ENCODE measurements at regions of chr6 and their contacts with region 1.

Region 1: GRCh38 chr6:31541658-31542521 is at the start of gene DDX39B:
- DNase-seq: peak; percentile 96
- ATAC-seq: peak; percentile 82
- H3K4me3 Mint-ChIP-seq: peak within 1 kb of the TSS; percentile 96
- H3K27ac Mint-ChIP-seq: peak within 1 kb of the TSS; percentile 94
- H3K4me1 Mint-ChIP-seq: peaks cover 50% of the 10 kb centered on the region
- H3K27me3 Mint-ChIP-seq: no peaks in the 10 kb centered on the region
- total RNA-seq, gene DDX39B: 477 to 488 TPM

Region 2: DNA sequence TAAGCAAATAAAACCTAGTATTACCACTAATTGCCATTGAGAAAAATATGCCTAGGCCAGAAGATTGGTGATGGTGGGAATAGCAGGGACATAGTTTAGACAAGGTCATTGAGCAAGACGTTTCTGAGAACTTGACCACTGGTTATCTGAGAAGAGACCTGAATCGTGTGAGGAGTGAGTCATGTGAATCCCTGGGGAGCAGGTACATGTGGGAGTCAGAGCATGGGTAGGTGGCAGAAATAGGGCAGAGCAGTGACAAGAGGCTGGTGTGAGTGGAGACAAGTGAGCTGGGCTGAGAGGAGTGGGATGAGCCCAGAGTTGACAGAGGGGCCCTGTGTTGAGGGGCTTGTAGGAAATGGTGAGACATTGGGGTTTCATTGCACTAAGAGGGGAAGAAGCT is 122.0 kb before region 1 on chr6:
- CTCF ChIA-PET with region 1: no interaction called
- POLR2A ChIA-PET with region 1: no interaction called
- DNase-seq: no peak
- ATAC-seq: no peak
- H3K4me3 Mint-ChIP-seq: no peak overlapping the region
- H3K27ac Mint-ChIP-seq: no peak overlapping the region
- H3K4me1 Mint-ChIP-seq: no peaks in the 10 kb centered on the region
- H3K27me3 Mint-ChIP-seq: peaks cover 2% of the 10 kb centered on the region

Region 3: GRCh38 chr6:31493875-31494694 is 47.8 kb before region 1 on chr6:
- CTCF ChIA-PET with region 1: interaction called, 46 read pairs
- POLR2A ChIA-PET with region 1: interaction called, 64 read pairs
- DNase-seq: peak; percentile 87
- ATAC-seq: peak; percentile 62
- H3K4me3 Mint-ChIP-seq: peak overlapping the region; percentile 91
- H3K27ac Mint-ChIP-seq: peak overlapping the region; percentile 95
- H3K4me1 Mint-ChIP-seq: peaks cover 62% of the 10 kb centered on the region
- H3K27me3 Mint-ChIP-seq: no peaks in the 10 kb centered on the region

Region 4: GRCh38 chr6:31575335-31575901 is 33.5 kb after region 1 on chr6 and contains the start of gene TNF:
- CTCF ChIA-PET with region 1: interaction called, 504 read pairs
- POLR2A ChIA-PET with region 1: interaction called, 62 read pairs
- DNase-seq: peak; percentile 86
- ATAC-seq: peak; percentile 38
- H3K4me3 Mint-ChIP-seq: peak within 1 kb of the TSS; percentile 93
- H3K27ac Mint-ChIP-seq: peak within 1 kb of the TSS; percentile 96
- H3K4me1 Mint-ChIP-seq: peaks cover 89% of the 10 kb centered on the region
- H3K27me3 Mint-ChIP-seq: no peaks in the 10 kb centered on the region
- total RNA-seq, gene TNF: 53.4 to 55.0 TPM

Region 5: GRCh38 chr6:31580807-31581433 is 39.0 kb after region 1 on chr6:
- CTCF ChIA-PET with region 1: interaction called, 504 read pairs
- POLR2A ChIA-PET with region 1: interaction called, 62 read pairs
- DNase-seq: peak; percentile 90
- ATAC-seq: peak; percentile 70
- H3K4me3 Mint-ChIP-seq: peak overlapping the region; percentile 98
- H3K27ac Mint-ChIP-seq: peak overlapping the region; percentile 88
- H3K4me1 Mint-ChIP-seq: peaks cover 72% of the 10 kb centered on the region
- H3K27me3 Mint-ChIP-seq: no peaks in the 10 kb centered on the region

Region 6: GRCh38 chr6:31614684-31615578 is 73.0 kb after region 1 on chr6 and contains the start of gene AIF1:
- CTCF ChIA-PET with region 1: interaction called, 7 read pairs
- POLR2A ChIA-PET with region 1: interaction called, 17 read pairs
- DNase-seq: no peak
- ATAC-seq: no peak
- H3K4me3 Mint-ChIP-seq: peak within 1 kb of the TSS; percentile 94
- H3K27ac Mint-ChIP-seq: peak within 1 kb of the TSS; percentile 96
- H3K4me1 Mint-ChIP-seq: peaks cover 45% of the 10 kb centered on the region
- H3K27me3 Mint-ChIP-seq: no peaks in the 10 kb centered on the region
- total RNA-seq, gene AIF1: 177 TPM

Region 7: DNA sequence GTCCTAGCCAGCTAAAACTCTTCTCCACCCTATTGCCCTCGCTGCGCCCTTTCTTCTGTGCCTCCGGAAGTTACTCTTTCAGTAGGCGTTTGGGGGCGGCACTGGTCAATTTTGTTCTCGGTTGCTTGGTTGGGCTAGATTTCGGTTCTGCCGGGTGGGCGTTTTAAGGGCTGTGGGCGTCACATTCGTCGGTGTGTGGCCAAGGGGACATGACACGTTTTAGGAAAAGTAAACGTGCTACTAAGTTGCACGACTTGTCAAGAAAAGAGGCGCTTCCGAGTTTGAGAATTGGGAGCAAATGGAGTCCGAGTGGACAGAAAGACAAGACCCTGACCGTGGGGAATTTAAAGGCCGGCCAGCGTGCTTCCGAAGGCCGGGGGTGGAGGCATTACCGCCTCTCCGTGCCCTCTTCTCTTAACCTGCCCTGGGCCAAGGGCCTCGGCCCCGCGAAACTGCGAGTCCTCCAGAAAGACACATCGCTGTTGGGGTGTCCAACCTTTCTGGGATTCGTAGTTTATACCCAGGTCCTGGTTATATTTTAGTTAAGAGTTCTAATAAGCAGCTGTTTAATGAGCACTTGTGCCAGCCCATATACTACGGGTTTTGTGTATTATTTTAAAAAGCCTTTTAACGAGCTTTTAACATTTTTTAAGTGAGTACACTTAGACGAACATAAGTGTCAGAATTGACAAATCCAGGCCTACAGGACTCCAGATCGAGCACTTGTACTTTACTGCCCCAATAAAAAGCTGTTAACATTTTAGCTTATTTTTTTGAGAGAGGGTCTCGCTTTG is 111.2 kb after region 1 on chr6:
- CTCF ChIA-PET with region 1: interaction called, 3 read pairs
- POLR2A ChIA-PET with region 1: interaction called, 14 read pairs
- DNase-seq: peak; percentile 93
- ATAC-seq: peak; percentile 72
- H3K4me3 Mint-ChIP-seq: peak overlapping the region; percentile 96
- H3K27ac Mint-ChIP-seq: peak overlapping the region; percentile 98
- H3K4me1 Mint-ChIP-seq: peaks cover 66% of the 10 kb centered on the region
- H3K27me3 Mint-ChIP-seq: no peaks in the 10 kb centered on the region

Region 8: DNA sequence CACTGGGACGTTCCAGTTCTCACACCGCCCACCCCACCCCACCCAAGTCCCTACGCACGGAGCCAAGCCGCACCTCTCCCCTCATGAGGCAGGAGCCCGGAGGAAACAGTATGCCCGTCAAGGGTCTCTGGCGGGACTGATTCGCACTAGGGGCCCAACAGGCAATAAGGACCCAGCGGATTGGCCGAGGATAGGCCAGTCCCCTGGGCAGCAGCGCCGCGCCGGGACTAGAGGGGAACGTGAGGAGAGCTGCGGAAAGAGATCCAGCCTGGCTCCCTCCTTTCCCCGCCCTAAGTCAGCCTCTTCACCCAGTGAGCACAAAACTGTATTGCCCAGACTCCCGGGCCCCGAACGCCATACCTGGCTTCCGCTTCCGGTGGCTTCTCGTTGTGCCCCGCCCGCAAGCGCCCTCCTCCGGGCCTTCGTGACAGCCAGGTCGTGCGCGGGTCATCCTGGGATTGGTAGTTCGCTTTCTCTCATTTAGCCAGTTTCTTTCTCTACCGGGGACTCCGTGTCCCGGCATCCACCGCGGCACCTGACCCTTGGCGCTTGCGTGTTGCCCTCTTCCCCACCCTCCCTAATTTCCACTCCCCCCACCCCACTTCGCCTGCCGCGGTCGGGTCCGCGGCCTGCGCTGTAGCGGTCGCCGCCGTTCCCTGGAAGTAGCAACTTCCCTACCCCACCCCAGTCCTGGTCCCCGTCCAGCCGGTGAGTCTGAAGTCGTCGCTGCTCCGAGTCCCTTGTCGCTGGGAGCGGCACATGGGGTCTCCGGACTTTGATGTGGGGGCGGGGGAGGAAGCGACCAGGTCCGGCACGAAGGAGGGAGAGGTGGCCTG is 123.8 kb after region 1 on chr6 and contains the start of gene CSNK2B:
- CTCF ChIA-PET with region 1: interaction called, 6 read pairs
- POLR2A ChIA-PET with region 1: interaction called, 23 read pairs
- DNase-seq: peak; percentile 99
- ATAC-seq: peak; percentile 85
- H3K4me3 Mint-ChIP-seq: peak within 1 kb of the TSS; percentile 96
- H3K27ac Mint-ChIP-seq: peak within 1 kb of the TSS; percentile 95
- H3K4me1 Mint-ChIP-seq: peaks cover 73% of the 10 kb centered on the region
- H3K27me3 Mint-ChIP-seq: no peaks in the 10 kb centered on the region
- total RNA-seq, gene CSNK2B: 233 to 250 TPM